ENCODE measurements at regions of chr5 and their contacts with region 1.

Region 1: DNA sequence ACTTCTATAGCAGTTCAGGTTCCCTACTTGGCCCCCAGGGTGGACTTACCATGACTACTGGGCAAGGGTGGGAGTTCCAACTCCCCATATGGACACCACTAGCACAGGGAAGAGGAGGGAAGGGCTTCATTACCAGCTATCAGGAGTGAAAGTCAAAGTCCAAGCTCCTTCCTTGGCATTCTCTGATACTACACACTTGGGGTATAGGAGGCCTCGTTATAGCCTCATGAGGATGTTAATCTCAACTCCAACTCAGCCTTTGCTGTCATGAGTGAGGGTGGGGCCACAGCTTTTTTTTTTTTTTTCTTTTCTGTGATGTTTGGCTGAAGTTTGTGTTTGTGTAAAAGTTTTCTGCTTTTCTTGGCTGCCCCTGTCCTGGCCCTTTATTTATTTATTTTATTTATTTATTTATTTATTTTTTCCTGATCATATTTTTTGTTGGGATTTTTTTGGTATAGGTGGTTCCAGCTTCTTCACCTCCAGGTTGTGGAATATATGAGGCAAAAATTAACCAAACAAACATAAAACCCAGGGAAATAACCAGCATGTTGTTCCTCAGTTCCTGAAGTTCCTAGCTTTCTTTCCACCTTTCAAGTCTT is 8.7 kb downstream of the GARIN3 start:
- DNase-seq: no peak
- H3K4me3 ChIP-seq: no peak overlapping the region
- H3K27ac ChIP-seq: no peak overlapping the region
- H3K4me1 ChIP-seq: no peaks in the 10 kb centered on the region
- H3K27me3 ChIP-seq: no peaks in the 10 kb centered on the region
- CTCF ChIP-seq: no peak

Region 2: DNA sequence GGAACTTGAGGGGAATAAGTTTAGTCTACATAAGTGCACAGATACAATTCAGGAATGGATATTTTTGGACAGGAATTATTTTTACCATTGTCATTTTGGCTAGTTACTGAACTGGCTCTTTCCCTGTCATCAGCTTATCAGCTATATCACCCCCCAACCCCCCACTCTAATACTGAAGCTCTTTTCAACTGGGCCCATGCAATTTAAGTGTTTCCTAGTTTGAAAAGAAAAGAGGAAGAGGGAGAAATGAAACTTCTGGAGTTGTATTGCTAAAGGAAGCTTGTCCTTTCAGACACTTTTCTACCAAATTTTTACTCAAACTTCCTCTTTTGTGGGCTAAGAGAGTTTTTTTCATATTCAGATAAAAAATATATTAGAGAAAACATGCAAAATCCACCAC is 175.9 kb before region 1 on chr5:
- CTCF ChIA-PET with region 1: no interaction called
- dilution Hi-C with region 1: no loop called
- in situ Hi-C with region 1: no loop called
- intact Hi-C with region 1: no loop called
- DNase-seq: no peak
- H3K4me3 ChIP-seq: no peak overlapping the region
- H3K27ac ChIP-seq: no peak overlapping the region
- H3K4me1 ChIP-seq: no peaks in the 10 kb centered on the region
- H3K27me3 ChIP-seq: no peaks in the 10 kb centered on the region
- CTCF ChIP-seq: no peak

Region 3: DNA sequence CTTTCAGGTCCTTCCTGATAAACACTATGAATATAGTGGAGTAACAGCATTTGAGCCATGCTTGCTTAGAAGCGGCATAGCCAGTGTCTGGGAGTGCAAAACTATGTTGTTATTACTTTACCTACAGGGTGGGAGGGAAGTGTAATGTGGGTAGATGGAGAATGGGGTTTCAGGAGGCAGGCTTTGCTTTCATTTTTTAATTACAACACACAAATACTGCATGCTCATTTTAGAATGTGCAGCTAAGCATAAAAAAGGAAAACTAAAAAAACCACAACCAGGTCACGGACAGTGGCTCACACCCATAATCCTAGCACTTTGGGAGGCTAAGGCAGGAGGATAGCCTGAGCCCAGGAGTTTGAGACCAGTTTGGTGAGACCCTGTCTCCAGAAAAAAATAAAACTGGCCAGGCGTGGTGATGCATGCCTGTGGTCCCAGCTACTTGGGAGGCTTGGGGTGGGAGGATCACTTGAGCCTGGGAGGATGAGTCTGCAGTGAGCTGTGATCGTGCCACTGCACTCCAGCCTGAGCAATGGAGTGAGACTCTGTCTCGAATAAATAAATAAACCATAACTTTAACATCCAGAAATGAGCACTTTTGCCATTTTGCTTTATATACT is 118.7 kb before region 1 on chr5:
- CTCF ChIA-PET with region 1: no interaction called
- dilution Hi-C with region 1: no loop called
- in situ Hi-C with region 1: no loop called
- intact Hi-C with region 1: no loop called
- DNase-seq: no peak
- H3K4me3 ChIP-seq: no peak overlapping the region
- H3K27ac ChIP-seq: no peak overlapping the region
- H3K4me1 ChIP-seq: no peaks in the 10 kb centered on the region
- H3K27me3 ChIP-seq: no peaks in the 10 kb centered on the region
- CTCF ChIP-seq: no peak

Region 4: GRCh38 chr5:157076558-157076957 is 80.8 kb before region 1 on chr5:
- CTCF ChIA-PET with region 1: no interaction called
- dilution Hi-C with region 1: no loop called
- in situ Hi-C with region 1: no loop called
- intact Hi-C with region 1: no loop called
- DNase-seq: no peak
- H3K4me3 ChIP-seq: no peak overlapping the region
- H3K27ac ChIP-seq: no peak overlapping the region
- H3K4me1 ChIP-seq: no peaks in the 10 kb centered on the region
- H3K27me3 ChIP-seq: no peaks in the 10 kb centered on the region
- CTCF ChIP-seq: no peak

Region 5: DNA sequence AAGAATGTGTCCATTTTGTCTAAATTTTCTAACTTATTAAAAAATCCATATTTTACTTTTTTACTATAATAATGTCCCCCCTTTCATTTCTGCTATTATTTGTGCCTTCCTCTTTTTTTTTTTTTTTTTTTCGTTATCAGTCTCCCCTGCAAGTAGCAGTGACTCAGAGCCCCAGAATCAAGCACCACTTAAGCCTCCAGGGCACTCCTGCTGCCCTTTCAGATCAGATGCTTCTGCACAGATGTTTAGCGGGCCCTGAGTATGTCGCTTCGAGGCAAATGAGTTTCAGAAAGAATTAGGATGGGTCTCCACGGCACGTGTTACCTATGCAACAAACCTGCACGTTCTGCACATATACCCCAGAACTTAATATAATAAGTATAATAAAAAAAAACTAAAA is 26.5 kb before region 1 on chr5:
- CTCF ChIA-PET with region 1: no interaction called
- dilution Hi-C with region 1: no loop called
- in situ Hi-C with region 1: no loop called
- intact Hi-C with region 1: loop called (anchors 2 kb)
- DNase-seq: no peak
- H3K4me3 ChIP-seq: no peak overlapping the region
- H3K27ac ChIP-seq: no peak overlapping the region
- H3K4me1 ChIP-seq: no peaks in the 10 kb centered on the region
- H3K27me3 ChIP-seq: no peaks in the 10 kb centered on the region
- CTCF ChIP-seq: no peak